AG04449 (cell line): ENCODE measurements at regions of chr3 and their contacts with region 1.

Region 1: DNA sequence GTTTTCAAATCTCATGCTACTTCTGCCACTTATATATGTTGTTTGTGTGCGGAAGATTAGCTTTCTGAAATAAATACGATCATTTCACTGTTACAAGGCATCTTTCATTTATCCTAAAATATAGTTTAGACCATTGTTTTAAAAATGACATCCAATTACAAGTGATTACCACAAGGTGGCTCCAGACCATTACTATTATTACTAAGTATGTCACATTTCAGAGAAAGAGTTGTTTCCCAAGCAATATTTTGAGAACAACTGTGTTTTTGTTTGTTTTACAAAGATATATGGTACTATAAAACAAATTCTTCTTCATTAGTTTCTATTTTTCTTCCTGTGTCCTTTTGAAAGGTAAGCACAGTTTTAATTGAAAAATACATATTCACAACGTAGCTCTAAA is 136.0 kb upstream of the RAP2B start:
- DNase-seq: no peak
- H3K4me3 ChIP-seq: no peak overlapping the region
- CTCF ChIP-seq: peak; percentile 35

Region 2: DNA sequence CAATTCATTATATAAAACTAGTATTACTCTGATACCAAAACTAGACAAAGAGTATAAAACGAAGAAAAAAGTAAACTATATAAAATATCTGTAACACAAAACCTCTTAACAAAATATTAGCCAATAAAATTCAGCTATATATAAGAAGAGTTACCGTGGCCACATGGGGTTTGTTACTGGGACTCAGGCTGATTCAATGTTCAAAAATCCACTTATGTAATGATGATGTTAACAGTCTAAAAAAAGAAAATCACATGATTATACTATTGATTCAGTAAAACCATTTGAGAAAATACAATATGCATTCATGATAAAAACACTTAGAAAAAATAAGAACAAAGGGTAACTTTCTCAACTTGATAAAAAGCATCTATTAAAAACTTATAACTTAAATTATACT is 172.8 kb before region 1 on chr3:
- CTCF ChIA-PET with region 1: no interaction called
- POLR2A ChIA-PET with region 1: no interaction called
- DNase-seq: no peak
- H3K4me3 ChIP-seq: no peak overlapping the region
- CTCF ChIP-seq: no peak

Region 3: DNA sequence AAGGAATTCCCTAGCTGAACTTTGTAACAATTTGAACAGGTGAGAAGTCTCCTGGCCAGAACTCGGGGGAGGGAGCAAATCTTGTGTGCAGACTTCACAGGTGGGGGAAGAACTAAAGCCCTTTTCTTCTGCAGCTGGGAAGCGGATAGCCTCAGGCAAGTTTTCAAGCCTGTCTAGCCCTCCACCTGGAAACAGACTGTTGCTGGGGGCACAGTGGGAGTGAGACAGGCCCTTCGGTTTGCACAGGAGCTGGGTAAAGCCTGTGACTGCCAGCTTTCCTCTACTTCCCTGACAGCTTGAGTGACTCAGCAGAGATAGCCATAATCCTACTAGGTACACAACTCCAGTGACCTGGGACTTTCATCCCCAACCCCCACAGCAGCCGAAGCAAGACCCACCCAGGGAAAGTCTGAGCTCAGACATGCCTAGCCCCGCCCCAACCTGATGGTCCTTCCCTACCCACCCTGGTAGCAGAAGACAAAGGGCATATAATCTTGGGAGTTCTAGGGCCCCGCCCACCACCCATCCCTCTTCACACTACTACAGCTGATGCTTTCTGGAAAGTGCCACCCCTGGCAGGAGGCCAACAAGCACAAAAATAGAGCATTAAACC is 614.8 kb after region 1 on chr3:
- CTCF ChIA-PET with region 1: no interaction called
- POLR2A ChIA-PET with region 1: no interaction called
- DNase-seq: no peak
- H3K4me3 ChIP-seq: no peak overlapping the region
- CTCF ChIP-seq: no peak

Region 4: DNA sequence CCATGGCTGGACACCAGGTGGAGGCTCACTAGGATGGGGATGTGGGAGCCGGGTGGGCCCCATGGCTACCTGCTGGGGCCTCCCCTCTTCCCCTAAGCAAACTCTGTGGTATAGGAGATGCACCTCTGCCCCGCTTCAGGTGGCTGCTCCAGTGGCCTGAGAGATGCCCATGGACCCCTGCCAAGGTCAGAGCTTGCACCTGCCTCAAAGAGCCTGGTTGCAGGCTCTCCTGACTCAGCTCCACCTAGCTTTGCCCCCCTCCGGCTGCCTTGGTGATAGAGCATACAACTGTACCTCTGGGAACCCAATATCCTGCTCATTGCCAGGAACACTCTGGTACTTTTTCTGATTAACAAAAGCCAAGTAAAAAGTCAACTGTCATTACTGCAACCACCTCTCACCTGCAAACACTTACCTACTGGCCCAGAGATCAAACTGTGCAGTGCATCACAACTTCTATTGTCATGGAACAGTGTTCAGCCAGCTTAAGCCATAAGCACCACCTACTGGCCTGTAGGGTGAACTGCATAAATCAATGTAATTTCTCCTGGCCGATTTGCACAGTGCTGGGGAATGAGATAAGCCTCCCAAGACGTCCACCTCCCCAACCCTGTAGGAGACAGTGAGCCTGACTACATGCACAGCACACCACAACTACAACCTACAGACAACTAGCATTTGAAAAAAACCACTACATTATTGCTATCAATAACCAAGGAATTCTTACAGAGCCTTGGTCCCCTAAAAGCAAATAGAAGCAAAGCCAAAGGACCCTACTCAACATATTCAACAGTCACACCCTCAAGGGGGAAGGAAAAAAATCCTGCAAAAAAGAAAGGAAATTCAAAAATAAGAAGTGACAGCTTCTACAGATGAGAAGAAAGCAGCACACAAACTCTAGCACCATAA is 742.8 kb after region 1 on chr3:
- CTCF ChIA-PET with region 1: interaction called, 25 read pairs
- POLR2A ChIA-PET with region 1: no interaction called
- DNase-seq: peak; percentile 5
- H3K4me3 ChIP-seq: no peak overlapping the region
- CTCF ChIP-seq: peak; percentile 86